GM18951 (cell line): ENCODE measurements at regions of chr3 and their contacts with region 1.

Region 1: GRCh38 chr3:36677331-36678007 is 86.9 kb downstream of the DCLK3 start:
- POLR2A ChIP-seq: no peak

Region 2: GRCh38 chr3:35965908-35966307 is 711.6 kb before region 1 on chr3:
- in situ Hi-C with region 1: loop called (anchors 25 kb)
- POLR2A ChIP-seq: no peak